ENCODE measurements at regions of chr18 and their contacts with region 1.

Region 1: GRCh38 chr18:63317982-63318881 is 1.3 kb downstream of the BCL2 start:
- DNase-seq: no peak

Region 2: DNA sequence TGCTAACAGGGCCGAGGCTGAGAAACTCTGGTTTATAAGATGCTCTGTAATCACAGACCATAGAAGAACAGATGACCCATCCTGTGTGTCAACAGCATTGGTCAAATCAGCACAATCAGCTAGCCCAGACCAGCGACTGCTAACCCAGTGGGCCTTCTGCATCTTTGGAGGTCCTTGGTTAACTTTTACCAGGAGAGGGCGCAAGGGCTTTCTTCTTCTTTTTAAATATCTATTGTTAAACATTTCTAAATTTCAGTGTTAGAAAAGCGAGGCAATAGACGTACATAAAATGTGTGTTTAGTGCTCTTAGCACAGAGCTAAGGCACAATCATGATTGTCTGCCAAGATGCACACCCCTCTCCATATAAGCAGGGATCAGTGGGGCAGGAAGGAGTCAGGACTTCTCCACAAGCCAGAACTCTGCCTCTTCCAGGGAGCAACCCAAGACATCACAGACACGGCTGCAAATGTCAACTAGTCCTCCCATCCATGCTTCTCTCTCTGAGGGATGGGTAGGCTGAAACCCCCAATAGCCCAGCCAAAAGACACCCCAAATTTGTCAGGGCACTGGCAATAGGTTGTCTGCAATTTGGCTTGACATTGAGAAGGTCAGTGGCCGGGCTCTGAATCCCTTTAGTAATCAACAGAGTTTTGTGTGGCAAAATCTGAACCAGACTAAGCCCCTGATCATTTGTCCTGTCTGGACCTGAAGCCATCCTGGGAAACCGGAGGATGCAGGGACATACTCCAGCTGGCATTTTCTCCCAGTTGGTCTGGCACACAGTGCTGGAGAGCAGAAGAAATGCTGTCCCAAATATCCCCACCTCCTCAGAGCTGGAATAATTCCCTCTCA is 186.9 kb before region 1 on chr18:
- CTCF ChIA-PET with region 1: interaction called, 15 read pairs
- POLR2A ChIA-PET with region 1: interaction called, 3 read pairs
- DNase-seq: peak; percentile 29

Region 3: DNA sequence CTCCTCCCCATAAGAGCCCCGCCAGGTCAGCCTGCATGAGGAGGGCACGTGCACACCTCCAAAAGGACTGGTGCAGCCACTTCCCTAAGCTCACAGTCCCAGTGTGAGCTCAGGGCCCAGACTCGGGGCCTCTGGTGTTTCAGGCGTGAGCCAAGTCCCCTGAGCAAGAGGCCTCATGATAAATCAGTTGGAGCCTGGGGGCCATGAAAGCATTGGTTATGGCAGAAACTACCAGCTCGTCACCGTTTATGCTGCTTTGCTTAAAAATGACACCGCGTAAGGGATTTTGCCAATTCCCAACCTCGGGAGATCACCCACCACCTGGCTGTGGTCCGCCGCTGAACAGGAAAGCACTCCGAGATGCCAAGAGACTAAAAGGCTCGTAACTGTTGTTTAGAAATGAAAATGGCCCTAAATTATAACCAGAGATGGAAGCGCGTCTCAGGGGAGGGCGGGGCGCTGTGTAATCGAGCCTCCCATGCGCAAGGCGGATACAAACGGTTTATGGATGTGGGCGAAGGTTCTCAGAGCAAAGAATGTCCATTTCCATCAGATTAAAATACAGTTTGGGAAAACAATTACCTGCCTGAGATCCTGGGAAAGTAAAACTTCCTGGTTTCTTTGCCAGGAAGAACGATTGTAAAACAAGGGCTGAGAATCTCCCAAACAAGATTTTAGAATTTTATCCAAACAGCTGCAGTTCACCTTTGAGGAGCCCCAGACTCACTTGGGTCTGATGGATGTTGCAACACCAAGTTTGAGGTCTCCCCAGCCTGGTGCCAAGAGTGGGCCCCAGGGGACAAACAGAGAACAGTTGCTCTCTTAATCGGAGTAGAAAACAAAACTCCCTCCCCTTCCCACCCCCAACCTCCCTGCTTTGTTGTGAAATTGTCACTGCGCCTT is 140.1 kb before region 1 on chr18:
- CTCF ChIA-PET with region 1: no interaction called
- POLR2A ChIA-PET with region 1: no interaction called
- DNase-seq: peak; percentile 19

Region 4: GRCh38 chr18:63307551-63308200 is 10.6 kb before region 1 on chr18:
- CTCF ChIA-PET with region 1: interaction called, 11 read pairs
- POLR2A ChIA-PET with region 1: no interaction called
- DNase-seq: no peak

Region 5: GRCh38 chr18:63664571-63664970 is 346.3 kb after region 1 on chr18:
- CTCF ChIA-PET with region 1: no interaction called
- POLR2A ChIA-PET with region 1: no interaction called
- DNase-seq: no peak